ENCODE measurements at regions of chr11 and their contacts with region 1.

Region 1: GRCh38 chr11:74726547-74727182 is 4.6 kb downstream of the CHRDL2 start:
- DNase-seq: peak in 1 of 2 donors; percentile 86
- H3K4me3 ChIP-seq: no peak overlapping the region
- H3K27ac ChIP-seq: no peak overlapping the region
- H3K4me1 ChIP-seq: peaks cover 3 to 7% of the 10 kb centered on the region in 2 donors
- H3K27me3 ChIP-seq: peaks cover 4% of the 10 kb centered on the region
- CTCF ChIP-seq: peak; percentile 89 to 94 (median 91)

Region 2: DNA sequence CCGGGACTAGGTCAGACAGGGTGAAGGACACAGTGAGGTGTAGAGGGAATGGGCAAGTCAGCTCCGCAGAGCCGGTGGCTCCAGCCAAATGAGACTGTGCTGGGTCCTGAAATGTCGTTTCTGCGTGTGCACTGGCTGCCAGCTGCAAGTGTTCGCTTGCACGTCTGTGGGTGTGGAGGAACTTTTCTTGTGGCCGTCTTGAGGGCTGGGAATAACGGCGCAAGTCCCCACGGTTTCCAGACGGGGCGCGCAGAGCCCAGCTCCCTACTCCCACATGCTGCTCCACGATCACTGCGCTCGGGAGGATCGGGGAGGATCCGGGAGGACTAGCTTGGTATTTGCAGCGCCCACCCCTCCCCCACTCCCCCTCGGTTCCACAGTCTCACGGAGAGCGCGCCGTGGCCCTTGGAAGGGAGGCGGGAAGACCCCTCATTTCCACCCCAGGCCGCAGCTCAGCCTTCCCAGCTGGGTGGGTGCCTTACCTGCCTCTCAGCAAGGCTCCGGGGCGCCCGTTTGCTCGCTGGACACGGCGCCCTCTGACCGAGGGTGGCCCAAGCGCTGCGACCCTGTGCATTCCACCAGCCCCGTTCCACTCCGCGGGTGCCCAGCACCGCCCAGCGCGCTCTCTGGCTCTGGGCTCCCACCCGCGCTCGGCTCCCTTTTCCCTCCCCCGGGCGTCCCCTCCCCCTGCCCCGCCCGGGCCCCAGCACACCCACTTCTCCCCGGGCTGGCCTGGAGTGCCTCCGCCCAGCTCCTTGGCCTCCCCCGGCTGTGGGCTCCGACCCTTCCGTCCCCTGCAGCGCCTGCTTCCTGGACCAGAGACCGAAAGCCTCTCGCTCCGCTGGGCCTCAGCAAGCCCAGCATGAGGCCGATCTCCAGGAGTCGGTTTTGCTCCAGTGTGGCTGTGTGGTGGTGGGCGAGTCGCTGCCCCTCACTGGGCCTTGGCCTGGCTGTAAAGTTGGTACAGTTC is 259.5 kb before region 1 on chr11 and contains the start of gene KCNE3:
- intact Hi-C with region 1: loop called (anchors 10 kb)
- DNase-seq: peak in 1 of 2 donors; percentile 62
- H3K4me3 ChIP-seq: peak within 1 kb of the TSS; percentile 46 to 68
- H3K27ac ChIP-seq: no peak within 1 kb of the TSS
- H3K4me1 ChIP-seq: peaks cover 0 to 8% of the 10 kb centered on the region in 2 donors
- H3K27me3 ChIP-seq: no peaks in the 10 kb centered on the region
- CTCF ChIP-seq: no peak
- total RNA-seq, gene KCNE3: not detected

Region 3: GRCh38 chr11:74611369-74611861 is 115.2 kb before region 1 on chr11:
- intact Hi-C with region 1: loop called (anchors 2 kb)
- DNase-seq: no peak
- H3K4me3 ChIP-seq: no peak overlapping the region
- H3K27ac ChIP-seq: peak overlapping the region; percentile 66 to 71
- H3K4me1 ChIP-seq: peaks cover 0 to 14% of the 10 kb centered on the region in 2 donors
- H3K27me3 ChIP-seq: no peaks in the 10 kb centered on the region
- CTCF ChIP-seq: peak; percentile 43 to 51 (median 51)

Region 4: GRCh38 chr11:74634537-74634936 is 92.1 kb before region 1 on chr11:
- intact Hi-C with region 1: loop called (anchors 2 kb)
- DNase-seq: no peak
- H3K4me3 ChIP-seq: no peak overlapping the region
- H3K27ac ChIP-seq: no peak overlapping the region
- H3K4me1 ChIP-seq: peaks cover 0 to 3% of the 10 kb centered on the region in 2 donors
- H3K27me3 ChIP-seq: no peaks in the 10 kb centered on the region
- CTCF ChIP-seq: peak in 1 of 3 experiments; percentile 33

Region 5: GRCh38 chr11:74702383-74703007 is 24.2 kb before region 1 on chr11:
- intact Hi-C with region 1: loop called (anchors 1 kb)
- DNase-seq: peak in 1 of 2 donors; percentile 79
- H3K4me3 ChIP-seq: no peak overlapping the region
- H3K27ac ChIP-seq: no peak overlapping the region
- H3K4me1 ChIP-seq: no peaks in the 10 kb centered on the region
- H3K27me3 ChIP-seq: no peaks in the 10 kb centered on the region
- CTCF ChIP-seq: peak; percentile 67 to 95 (median 88)

Measured in ascending aorta (tissue), 2 donors.